ENCODE measurements at regions of chr2 and their contacts with region 1.

Region 1: GRCh38 chr2:176104325-176105077 is 2.6 kb upstream of the HOXD11 start:
- DNase-seq: no peak
- H3K4me3 ChIP-seq: peak overlapping the region in 1 of 4 experiments; percentile 50; a peak in 2 of 8 replicates
- H3K27ac ChIP-seq: no peak overlapping the region
- H3K4me1 ChIP-seq: peaks cover 0 to 27% (median 14%) of the 10 kb centered on the region in 4 experiments; a peak in 6 of 7 replicates
- H3K27me3 ChIP-seq: peaks cover 98 to 99% (median 99%) of the 10 kb centered on the region in 4 experiments
- CTCF ChIP-seq: no peak
- EP300 ChIP-seq: no peak
- POLR2A ChIP-seq: no peak
- RAD21 ChIP-seq: no peak

Region 2: GRCh38 chr2:175964195-175964594 is 140.3 kb before region 1 on chr2:
- CTCF ChIA-PET with region 1: no interaction called
- POLR2A ChIA-PET with region 1: no interaction called
- DNase-seq: no peak
- H3K4me3 ChIP-seq: no peak overlapping the region
- H3K27ac ChIP-seq: no peak overlapping the region
- H3K4me1 ChIP-seq: no peaks in the 10 kb centered on the region
- H3K27me3 ChIP-seq: no peaks in the 10 kb centered on the region
- CTCF ChIP-seq: peak in 2 of 3 experiments; percentile 13 to 28; a peak in 2 of 4 replicates
- EP300 ChIP-seq: no peak
- POLR2A ChIP-seq: no peak
- RAD21 ChIP-seq: peak in 1 of 2 experiments; percentile 22; a peak in 1 of 4 replicates

Region 3: DNA sequence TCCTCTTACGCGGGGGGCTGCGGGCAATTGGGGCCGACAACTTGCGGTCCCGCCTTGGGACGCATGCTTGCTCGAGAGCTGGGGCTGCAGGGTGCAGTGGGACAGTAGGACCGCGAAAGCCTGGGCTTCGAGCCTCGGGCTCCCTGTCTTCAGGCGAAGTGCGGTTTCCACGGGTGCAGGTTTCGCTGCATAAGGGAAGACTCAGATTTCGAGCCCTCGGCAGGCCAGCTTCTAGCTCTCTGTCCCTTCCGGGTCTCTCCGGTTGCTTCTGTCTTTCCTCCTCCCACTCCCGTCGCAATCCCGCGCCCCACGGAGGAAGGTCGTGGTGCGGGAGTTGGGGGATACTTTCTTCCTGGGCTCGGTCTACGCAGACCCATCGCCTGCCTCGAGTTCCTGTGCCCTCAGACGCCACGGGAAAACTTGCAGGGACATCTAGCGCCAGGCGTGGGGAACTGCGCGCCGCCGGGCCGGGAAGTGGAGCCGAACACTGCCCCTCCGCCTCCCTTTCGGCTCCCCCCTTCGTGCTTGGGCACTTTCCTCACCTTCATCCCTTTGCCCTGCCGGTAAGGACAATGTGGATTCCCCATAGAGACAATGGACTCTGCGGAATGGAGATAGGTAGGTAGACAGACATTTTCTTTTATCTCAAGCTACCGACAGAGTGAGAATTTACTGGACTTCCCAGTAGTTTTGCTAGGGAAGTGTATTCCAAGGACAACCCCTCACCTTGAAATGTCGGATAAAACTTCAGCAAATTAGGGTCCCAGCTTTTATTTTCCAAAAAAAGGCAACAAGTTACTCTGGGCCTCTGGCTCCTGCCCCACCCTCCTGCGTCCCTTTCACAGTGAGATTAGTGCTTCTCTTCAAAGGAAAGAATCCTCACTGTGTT is 16.2 kb before region 1 on chr2:
- CTCF ChIA-PET with region 1: interaction called, 130 read pairs
- POLR2A ChIA-PET with region 1: no interaction called
- DNase-seq: peak in 1 of 2 experiments; percentile 80
- H3K4me3 ChIP-seq: peak overlapping the region in 3 of 4 experiments; percentile 28 to 55 (median 34); a peak in 5 of 8 replicates
- H3K27ac ChIP-seq: no peak overlapping the region
- H3K4me1 ChIP-seq: peaks cover 0 to 15% (median 8%) of the 10 kb centered on the region in 4 experiments; a peak in 6 of 7 replicates
- H3K27me3 ChIP-seq: peaks cover 94 to 100% (median 99%) of the 10 kb centered on the region in 4 experiments
- CTCF ChIP-seq: peak in 2 of 3 experiments; percentile 42 to 64; a peak in 3 of 4 replicates
- EP300 ChIP-seq: no peak
- POLR2A ChIP-seq: no peak
- RAD21 ChIP-seq: peak; percentile 48 to 61

Measured in H1 (cell line).